Posterior vena cava (tissue), 2 donors: ENCODE measurements at regions of chr1 and their contacts with region 1.

Region 1: GRCh38 chr1:1507305-1507704 is 4.7 kb upstream of the ATAD3A start:
- DNase-seq: no peak

Region 2: DNA sequence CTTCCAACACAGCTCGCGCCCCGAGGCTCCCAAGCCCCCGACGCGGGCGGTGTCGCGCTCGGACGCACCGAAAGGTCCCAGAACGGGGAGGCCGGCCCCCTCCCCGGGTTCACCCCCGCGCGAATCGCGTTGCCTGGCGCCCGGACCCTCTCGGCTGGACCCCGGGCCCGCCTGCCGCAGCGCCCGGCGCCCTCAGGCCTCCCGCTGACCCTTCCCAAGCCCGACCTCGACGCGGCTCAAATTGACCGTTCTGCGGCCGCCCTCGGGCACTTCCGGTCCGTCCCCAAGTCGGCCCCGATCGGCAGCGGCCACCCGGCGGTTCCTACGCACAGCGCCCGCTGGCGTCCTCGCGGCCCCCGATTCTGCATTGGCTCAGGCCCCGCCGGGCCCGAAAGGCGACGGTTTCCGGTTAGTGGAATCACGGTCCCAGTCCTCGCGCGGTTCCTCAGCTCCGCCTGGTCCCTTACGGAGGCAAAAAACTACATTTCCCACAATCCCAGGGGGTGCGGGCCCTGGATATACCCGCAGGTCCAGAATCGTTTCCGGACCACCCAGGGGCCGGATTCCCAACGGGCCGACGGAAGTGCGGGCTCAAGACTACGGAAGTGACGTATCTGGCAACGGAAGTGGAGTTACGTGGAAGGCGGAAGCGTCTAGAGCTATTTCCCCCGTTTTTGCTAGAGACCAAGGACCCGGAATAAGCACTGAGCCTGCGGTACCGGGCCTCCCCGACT is 132.2 kb before region 1 on chr1 and contains the start of gene AURKAIP1:
- intact Hi-C with region 1: loop called in 1 of 2 experiments (anchors 10 kb)
- DNase-seq: peak; percentile 99
- total RNA-seq, gene AURKAIP1: 70.9 to 78.8 TPM

Region 3: GRCh38 chr1:1441002-1441888 is 66.1 kb before region 1 on chr1:
- intact Hi-C with region 1: loop called in 1 of 2 experiments (anchors 5 kb)
- DNase-seq: peak; percentile 84

Region 4: GRCh38 chr1:1461721-1462317 is 45.5 kb before region 1 on chr1:
- intact Hi-C with region 1: no loop called
- DNase-seq: no peak

Region 5: GRCh38 chr1:1540090-1540817 is 32.9 kb after region 1 on chr1 and contains the start of gene TMEM240:
- intact Hi-C with region 1: no loop called
- DNase-seq: peak; percentile 93
- total RNA-seq, gene TMEM240: 3.9 to 7.8 TPM

Region 6: GRCh38 chr1:1577367-1578011 is 70.2 kb after region 1 on chr1:
- intact Hi-C with region 1: no loop called
- DNase-seq: no peak